Colonic mucosa (tissue), 4 donors: ENCODE measurements at regions of chr5 and their contacts with region 1.

Region 1: DNA sequence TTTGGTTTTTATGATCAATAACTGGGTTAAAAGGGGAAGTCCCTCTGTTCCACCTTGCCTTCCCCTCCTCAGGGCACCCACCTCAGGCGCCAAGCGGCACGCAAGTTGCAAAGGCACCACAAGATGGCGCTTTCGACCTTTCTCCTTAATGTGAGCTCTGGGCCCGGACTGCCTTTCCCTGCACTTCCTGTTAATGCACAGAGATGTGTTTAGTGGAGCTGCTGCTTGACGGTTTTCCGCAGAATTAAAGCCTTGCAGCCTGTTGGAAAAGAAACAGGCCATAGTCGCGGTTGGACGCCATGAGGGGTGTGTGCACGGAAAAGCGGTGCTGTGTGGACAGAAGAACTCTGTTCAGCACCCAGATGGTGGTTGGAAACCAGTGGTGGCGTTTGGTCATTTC is 17.9 kb downstream of the CXCL14 start:
- DNase-seq: peak; percentile 85
- H3K4me3 ChIP-seq: no peak overlapping the region
- H3K27ac ChIP-seq: no peak overlapping the region
- H3K4me1 ChIP-seq: peaks cover 5% of the 10 kb centered on the region
- H3K27me3 ChIP-seq: no peaks in the 10 kb centered on the region
- CTCF ChIP-seq: peak; percentile 76

Region 2: DNA sequence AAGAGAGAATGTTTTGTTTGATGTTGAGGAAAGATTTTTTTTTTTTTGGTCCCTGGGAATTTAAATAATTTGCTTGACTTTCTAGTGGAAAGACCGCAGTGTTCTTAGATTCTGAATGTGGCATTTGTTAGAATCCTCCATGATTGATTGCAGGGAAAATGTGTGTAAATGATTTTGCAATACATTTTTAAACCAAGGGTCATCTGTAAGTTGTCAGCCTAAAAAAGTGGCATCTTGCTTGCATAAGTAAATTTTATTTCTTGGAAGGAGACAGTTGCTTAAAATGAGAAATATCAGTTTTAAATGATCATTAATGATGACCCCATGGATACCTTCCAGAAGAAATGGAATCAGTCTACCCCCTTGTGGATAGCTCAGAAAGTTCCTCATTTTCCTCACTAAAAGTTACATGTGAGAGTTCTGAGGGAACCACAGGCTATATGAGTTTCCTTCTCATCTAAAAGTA is 168.5 kb after region 1 on chr5:
- intact Hi-C with region 1: loop called (anchors 5 kb)
- DNase-seq: no peak
- H3K4me3 ChIP-seq: no peak overlapping the region
- H3K27ac ChIP-seq: no peak overlapping the region
- H3K4me1 ChIP-seq: no peaks in the 10 kb centered on the region
- H3K27me3 ChIP-seq: no peaks in the 10 kb centered on the region
- CTCF ChIP-seq: peak; percentile 34